Left colon (tissue), 2 donors: ENCODE measurements at regions of chr14 and their contacts with region 1.

Region 1: DNA sequence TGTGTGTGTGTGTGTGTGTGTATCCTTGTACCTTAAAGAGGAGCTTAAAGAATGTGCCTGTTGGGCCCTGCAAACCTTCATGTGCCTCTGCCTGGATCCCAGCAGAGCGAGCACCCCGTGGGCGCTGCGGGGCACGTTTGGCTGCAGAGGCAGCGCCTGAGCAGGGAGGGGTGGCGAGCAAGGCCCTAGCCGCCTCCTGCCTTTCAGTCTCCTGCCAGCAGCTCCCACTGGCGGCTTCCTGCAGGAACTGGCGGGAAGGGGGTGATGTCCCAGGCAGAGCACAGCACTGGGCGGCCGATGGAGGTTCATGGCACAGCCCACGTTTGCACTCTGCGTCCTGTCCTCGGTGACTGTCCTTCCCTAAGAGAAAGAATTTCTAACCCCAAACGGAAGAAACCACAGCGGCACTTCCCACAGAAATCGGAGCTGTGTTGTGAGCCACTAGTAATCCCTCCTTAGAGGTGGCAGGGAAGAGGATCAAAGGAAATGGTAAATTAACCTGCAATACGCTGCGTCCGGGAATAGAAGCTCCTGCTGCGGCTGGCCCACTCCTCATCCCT is 19.8 kb downstream of the ZBTB42 start:
- DNase-seq: peak; percentile 64 to 65
- ATAC-seq: peak; percentile 65

Region 2: DNA sequence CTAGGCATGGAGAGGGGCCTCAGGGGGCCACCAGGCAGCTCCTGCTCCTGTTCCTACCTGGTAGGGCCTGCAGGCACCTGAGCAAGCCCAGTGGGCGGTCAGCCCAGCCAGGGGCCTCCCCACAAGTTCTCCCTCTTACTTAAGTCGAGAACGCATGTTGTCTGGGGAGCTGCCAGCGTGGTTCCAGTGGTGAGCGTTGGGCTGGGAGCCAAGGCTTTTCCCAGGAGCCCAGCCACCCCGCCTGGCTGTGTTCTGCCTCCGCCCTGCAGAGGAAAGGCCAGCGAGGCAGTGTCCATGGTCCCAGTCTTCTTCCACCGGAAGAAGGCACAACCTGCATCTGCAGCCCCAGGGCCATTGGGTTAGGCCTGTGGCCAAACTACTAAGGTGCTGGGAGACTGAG is 239.8 kb before region 1 on chr14:
- intact Hi-C with region 1: no loop called
- DNase-seq: peak; percentile 46 to 74
- ATAC-seq: peak; percentile 27

Region 3: GRCh38 chr14:104731249-104731924 is 89.4 kb before region 1 on chr14:
- intact Hi-C with region 1: no loop called
- DNase-seq: no peak
- ATAC-seq: no peak

Region 4: GRCh38 chr14:104768437-104769323 is 52.1 kb before region 1 on chr14:
- intact Hi-C with region 1: loop called in 1 of 2 experiments (anchors 5 kb)
- DNase-seq: peak; percentile 79 to 91
- ATAC-seq: peak; percentile 87

Region 5: DNA sequence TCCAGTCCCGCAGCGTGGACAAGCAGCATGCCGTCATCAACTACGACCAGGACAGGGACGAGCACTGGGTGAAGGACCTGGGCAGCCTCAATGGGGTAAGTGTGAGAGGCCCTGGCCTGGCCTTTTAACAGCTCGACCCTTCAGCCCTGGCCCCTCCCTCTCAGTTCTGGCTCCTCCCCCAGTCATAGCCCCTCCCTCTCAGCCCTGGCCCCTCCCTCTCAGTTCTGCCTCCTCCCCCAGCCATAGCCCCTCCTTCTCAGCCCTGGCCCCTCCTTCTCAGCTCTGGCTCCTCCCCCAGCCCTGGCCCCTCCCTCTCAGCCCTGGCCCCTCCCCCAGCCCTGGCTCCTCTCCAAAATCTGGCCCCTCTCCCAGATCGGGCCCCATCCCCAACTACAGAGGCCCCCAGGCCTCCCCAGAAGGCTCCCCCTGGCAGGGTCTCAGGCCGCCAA is 55.5 kb after region 1 on chr14:
- intact Hi-C with region 1: no loop called
- DNase-seq: peak in 1 of 2 donors; percentile 25
- ATAC-seq: peak; percentile 77